Activated naive CD4-positive, alpha-beta T cell treated with anti-CD3 and anti-CD28 coated beads for 36 hours (primary cell): ENCODE measurements at regions of chr12 and their contacts with region 1.

Region 1: GRCh38 chr12:7645394-7646177 is 20.1 kb downstream of the APOBEC1 start:
- DNase-seq: peak; percentile 55
- H3K4me3 Mint-ChIP-seq: no peak overlapping the region
- H3K27ac Mint-ChIP-seq: no peak overlapping the region
- H3K4me1 Mint-ChIP-seq: peaks cover 6% of the 10 kb centered on the region
- H3K27me3 Mint-ChIP-seq: no peaks in the 10 kb centered on the region

Region 2: GRCh38 chr12:7129872-7130680 is 515.5 kb before region 1 on chr12 and contains the start of gene CLSTN3:
- CTCF ChIA-PET with region 1: no interaction called
- intact Hi-C with region 1: loop called (anchors 5 kb)
- DNase-seq: peak; percentile 87
- H3K4me3 Mint-ChIP-seq: peak within 1 kb of the TSS; percentile 82
- H3K27ac Mint-ChIP-seq: peak within 1 kb of the TSS; percentile 55
- H3K4me1 Mint-ChIP-seq: peaks cover 27% of the 10 kb centered on the region
- H3K27me3 Mint-ChIP-seq: no peaks in the 10 kb centered on the region
- total RNA-seq, gene CLSTN3: 18.3 to 21.8 TPM

Region 3: GRCh38 chr12:7219599-7220243 is 425.9 kb before region 1 on chr12:
- CTCF ChIA-PET with region 1: interaction called, 10 read pairs
- intact Hi-C with region 1: no loop called
- DNase-seq: peak; percentile 87
- H3K4me3 Mint-ChIP-seq: no peak overlapping the region
- H3K27ac Mint-ChIP-seq: no peak overlapping the region
- H3K4me1 Mint-ChIP-seq: no peaks in the 10 kb centered on the region
- H3K27me3 Mint-ChIP-seq: no peaks in the 10 kb centered on the region

Region 4: GRCh38 chr12:7583571-7583970 is 62.0 kb before region 1 on chr12:
- CTCF ChIA-PET with region 1: interaction called, 23 read pairs
- intact Hi-C with region 1: no loop called
- DNase-seq: no peak
- H3K4me3 Mint-ChIP-seq: no peak overlapping the region
- H3K27ac Mint-ChIP-seq: no peak overlapping the region
- H3K4me1 Mint-ChIP-seq: peaks cover 2% of the 10 kb centered on the region
- H3K27me3 Mint-ChIP-seq: peaks cover 18% of the 10 kb centered on the region

Region 5: GRCh38 chr12:7995266-7995963 is 349.8 kb after region 1 on chr12:
- CTCF ChIA-PET with region 1: no interaction called
- intact Hi-C with region 1: loop called (anchors 10 kb)
- DNase-seq: peak; percentile 95
- H3K4me3 Mint-ChIP-seq: no peak overlapping the region
- H3K27ac Mint-ChIP-seq: no peak overlapping the region
- H3K4me1 Mint-ChIP-seq: peaks cover 13% of the 10 kb centered on the region
- H3K27me3 Mint-ChIP-seq: no peaks in the 10 kb centered on the region